ENCODE measurements at regions of chr1 and their contacts with region 1.

Region 1: GRCh38 chr1:186102557-186103148 is 272.4 kb downstream of the TPR start:
- DNase-seq: peak; percentile 96
- H3K4me3 ChIP-seq: peak overlapping the region in 2 of 3 experiments; percentile 22 to 50
- H3K27ac ChIP-seq: peak overlapping the region; percentile 84
- H3K4me1 ChIP-seq: peaks cover 19% of the 10 kb centered on the region
- H3K27me3 ChIP-seq: no peaks in the 10 kb centered on the region
- CTCF ChIP-seq: no peak
- POLR2A ChIP-seq: no peak

Region 2: DNA sequence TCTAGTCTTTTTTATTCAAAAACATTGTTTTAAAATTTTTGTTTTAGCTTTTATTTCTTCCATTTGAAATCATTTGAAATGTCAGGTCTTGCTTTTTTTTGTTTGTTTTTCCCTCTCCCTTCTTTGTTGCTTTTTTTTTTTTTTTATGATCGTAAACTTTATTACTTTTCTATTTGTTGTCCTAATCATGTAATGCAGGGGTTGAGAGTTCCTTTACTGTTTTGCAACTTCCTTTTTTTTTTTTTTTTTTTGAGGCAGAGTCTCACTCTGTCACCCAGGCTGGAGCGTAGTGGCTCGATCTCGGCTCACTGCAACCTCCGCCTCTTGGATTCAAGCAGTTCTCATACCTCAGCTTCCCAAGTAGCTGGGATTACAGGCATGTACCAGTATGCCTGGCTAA is 810.4 kb before region 1 on chr1:
- CTCF ChIA-PET with region 1: no interaction called
- POLR2A ChIA-PET with region 1: no interaction called
- dilution Hi-C with region 1: no loop called
- intact Hi-C with region 1: no loop called
- DNase-seq: no peak
- H3K4me3 ChIP-seq: no peak overlapping the region
- H3K27ac ChIP-seq: no peak overlapping the region
- H3K4me1 ChIP-seq: no peaks in the 10 kb centered on the region
- H3K27me3 ChIP-seq: no peaks in the 10 kb centered on the region
- CTCF ChIP-seq: no peak
- POLR2A ChIP-seq: no peak

Region 3: GRCh38 chr1:185813401-185813979 is 289.2 kb before region 1 on chr1:
- CTCF ChIA-PET with region 1: interaction called, 4 read pairs
- POLR2A ChIA-PET with region 1: no interaction called
- dilution Hi-C with region 1: no loop called
- intact Hi-C with region 1: loop called (anchors 2 kb)
- DNase-seq: peak; percentile 80
- H3K4me3 ChIP-seq: no peak overlapping the region
- H3K27ac ChIP-seq: no peak overlapping the region
- H3K4me1 ChIP-seq: no peaks in the 10 kb centered on the region
- H3K27me3 ChIP-seq: no peaks in the 10 kb centered on the region
- CTCF ChIP-seq: peak; percentile 26 to 40
- POLR2A ChIP-seq: no peak

Region 4: GRCh38 chr1:185864889-185865288 is 237.8 kb before region 1 on chr1:
- CTCF ChIA-PET with region 1: no interaction called
- POLR2A ChIA-PET with region 1: no interaction called
- dilution Hi-C with region 1: no loop called
- intact Hi-C with region 1: loop called (anchors 2 kb)
- DNase-seq: peak; percentile 74
- H3K4me3 ChIP-seq: no peak overlapping the region
- H3K27ac ChIP-seq: peak overlapping the region; percentile 63
- H3K4me1 ChIP-seq: peaks cover 36% of the 10 kb centered on the region
- H3K27me3 ChIP-seq: no peaks in the 10 kb centered on the region
- CTCF ChIP-seq: no peak
- POLR2A ChIP-seq: no peak

Region 5: DNA sequence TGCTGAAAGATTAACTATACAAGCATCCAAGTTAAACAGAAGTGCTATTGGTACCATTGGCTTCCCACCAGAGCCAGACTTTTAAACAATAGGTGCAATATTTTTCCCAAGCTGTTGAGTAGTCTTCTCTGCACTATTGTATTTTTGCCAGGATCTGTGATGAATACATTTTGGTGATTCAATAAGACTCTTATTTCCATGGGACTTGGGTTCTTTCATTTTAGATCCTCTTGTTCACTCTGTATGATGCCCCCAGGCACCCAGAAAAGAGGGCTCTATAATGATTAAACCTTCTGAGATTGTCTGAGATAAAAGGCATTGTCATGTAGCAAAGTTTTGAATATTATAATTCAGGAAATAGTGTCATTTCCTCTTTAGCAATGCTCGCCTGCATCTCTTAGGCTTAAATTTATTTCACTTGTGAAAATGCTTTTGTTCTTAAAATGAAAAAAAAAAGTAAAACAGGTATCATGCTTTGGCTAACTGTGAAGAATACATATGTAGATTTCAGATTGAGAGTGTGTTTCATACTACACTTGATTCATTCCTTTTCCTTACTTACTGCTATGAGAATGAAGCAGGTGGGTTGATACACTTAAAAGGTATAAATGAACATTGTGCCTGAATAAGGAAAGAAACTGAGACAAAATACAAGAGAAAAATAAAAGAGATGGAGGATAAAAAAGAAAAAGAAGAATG is 93.5 kb before region 1 on chr1:
- CTCF ChIA-PET with region 1: no interaction called
- POLR2A ChIA-PET with region 1: no interaction called
- dilution Hi-C with region 1: no loop called
- intact Hi-C with region 1: loop called (anchors 2 kb)
- DNase-seq: peak; percentile 96
- H3K4me3 ChIP-seq: peak overlapping the region in 1 of 3 experiments; percentile 28
- H3K27ac ChIP-seq: peak overlapping the region; percentile 76
- H3K4me1 ChIP-seq: peaks cover 15% of the 10 kb centered on the region
- H3K27me3 ChIP-seq: no peaks in the 10 kb centered on the region
- CTCF ChIP-seq: no peak
- POLR2A ChIP-seq: no peak

Region 6: DNA sequence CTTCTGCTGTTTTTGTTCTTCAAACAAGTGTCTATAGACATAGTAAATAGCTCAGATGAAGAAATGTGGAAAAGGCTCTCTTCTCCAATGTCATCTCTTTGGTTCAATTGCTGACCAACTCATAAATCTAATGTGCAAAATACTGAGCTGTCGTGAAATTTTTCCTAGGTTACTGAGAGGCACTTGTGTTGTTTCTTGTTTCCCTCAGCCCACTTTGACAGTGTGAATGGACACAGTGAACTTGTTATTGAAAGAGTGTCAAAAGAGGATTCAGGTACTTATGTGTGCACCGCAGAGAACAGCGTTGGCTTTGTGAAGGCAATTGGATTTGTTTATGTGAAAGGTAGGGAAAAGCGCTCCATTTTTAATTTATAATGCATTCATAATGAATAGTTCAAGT is 27.1 kb after region 1 on chr1:
- CTCF ChIA-PET with region 1: no interaction called
- POLR2A ChIA-PET with region 1: no interaction called
- dilution Hi-C with region 1: no loop called
- intact Hi-C with region 1: no loop called
- DNase-seq: no peak
- H3K4me3 ChIP-seq: no peak overlapping the region
- H3K27ac ChIP-seq: no peak overlapping the region
- H3K4me1 ChIP-seq: no peaks in the 10 kb centered on the region
- H3K27me3 ChIP-seq: no peaks in the 10 kb centered on the region
- CTCF ChIP-seq: no peak
- POLR2A ChIP-seq: no peak

Region 7: GRCh38 chr1:186188004-186188539 is 85.4 kb after region 1 on chr1:
- CTCF ChIA-PET with region 1: no interaction called
- POLR2A ChIA-PET with region 1: no interaction called
- dilution Hi-C with region 1: no loop called
- intact Hi-C with region 1: loop called (anchors 1 kb)
- DNase-seq: peak; percentile 78
- H3K4me3 ChIP-seq: no peak overlapping the region
- H3K27ac ChIP-seq: peak overlapping the region; percentile 83
- H3K4me1 ChIP-seq: peaks cover 25% of the 10 kb centered on the region
- H3K27me3 ChIP-seq: no peaks in the 10 kb centered on the region
- CTCF ChIP-seq: no peak
- POLR2A ChIP-seq: no peak